ENCODE measurements at regions of chr17 and their contacts with region 1.

Region 1: GRCh38 chr17:76547184-76547641 is 7.4 kb downstream of the PRCD start:
- DNase-seq: peak; percentile 70 to 82 (median 74)
- ATAC-seq: peak; percentile 94
- H3K4me3 ChIP-seq: no peak overlapping the region
- H3K27ac ChIP-seq: no peak overlapping the region
- H3K4me1 ChIP-seq: peaks cover 0 to 39% of the 10 kb centered on the region in 2 experiments; a peak in 3 of 5 replicates
- H3K27me3 ChIP-seq: no peaks in the 10 kb centered on the region
- CTCF ChIP-seq: peak; percentile 84 to 88 (median 86)
- EP300 ChIP-seq: no peak
- POLR2A ChIP-seq: no peak
- RAD21 ChIP-seq: peak; percentile 72 to 90

Region 2: DNA sequence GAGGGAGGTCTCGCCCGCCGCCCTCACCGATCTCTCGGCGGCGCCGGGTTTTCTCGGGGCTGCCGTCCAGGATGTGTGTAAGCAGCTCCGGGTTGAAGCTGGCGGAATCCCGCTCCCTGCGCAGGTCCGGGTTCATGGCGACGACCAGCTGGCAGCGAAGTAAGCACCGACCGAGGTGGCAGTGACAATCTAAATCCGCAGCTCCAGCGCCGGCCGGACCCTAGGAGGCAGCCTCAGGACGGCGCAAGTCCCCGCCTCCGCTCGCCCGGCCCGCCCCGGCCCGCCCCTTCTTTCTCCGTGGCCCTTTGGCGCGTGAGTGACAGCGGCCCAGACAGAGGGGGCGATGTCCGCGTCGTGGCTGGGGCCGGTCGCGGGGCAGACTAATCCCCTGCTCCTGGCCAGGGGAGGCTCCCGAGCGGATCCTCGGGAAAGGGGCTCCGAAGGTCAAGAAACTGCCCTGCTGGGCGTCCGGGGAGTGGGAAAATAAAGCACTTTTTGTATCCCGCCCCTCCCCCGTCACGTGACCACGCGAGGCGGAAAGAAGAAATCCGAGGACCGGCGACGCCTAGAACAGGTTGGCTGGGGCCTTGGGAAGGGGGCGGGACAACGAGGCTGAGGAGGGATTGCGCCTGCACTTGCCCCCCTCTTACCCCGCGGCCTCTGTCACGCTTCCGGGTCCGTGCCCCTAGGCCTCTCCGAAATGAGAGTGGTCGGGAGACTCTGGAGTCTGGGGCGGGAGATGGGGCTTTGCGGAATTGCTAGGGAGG is 568.1 kb before region 1 on chr17 and contains the starts of genes ACOX1 and TEN1:
- CTCF ChIA-PET with region 1: no interaction called
- POLR2A ChIA-PET with region 1: no interaction called
- in situ Hi-C with region 1: no loop called
- intact Hi-C with region 1: no loop called
- DNase-seq: peak; percentile 91 to 98 (median 92)
- ATAC-seq: peak; percentile 94
- H3K4me3 ChIP-seq: peak within 1 kb of the TSS; percentile 67
- H3K27ac ChIP-seq: peak within 1 kb of the TSS; percentile 78
- H3K4me1 ChIP-seq: peaks cover 34 to 39% of the 10 kb centered on the region in 2 experiments
- H3K27me3 ChIP-seq: no peaks in the 10 kb centered on the region
- CTCF ChIP-seq: peak; percentile 20 to 47 (median 28); a peak in 4 of 6 replicates
- EP300 ChIP-seq: peak; percentile 24; the same call in 1 of the 2 replicates
- POLR2A ChIP-seq: peak; percentile 96
- RAD21 ChIP-seq: peak in 1 of 2 experiments; percentile 27; a peak in 2 of 4 replicates
- polyA plus RNA-seq, gene ACOX1: 8.6 to 9.5 TPM
- polyA plus RNA-seq, gene TEN1: 1.3 to 3.3 TPM

Region 3: GRCh38 chr17:76467366-76467765 is 79.8 kb before region 1 on chr17 and contains the start of gene AANAT:
- CTCF ChIA-PET with region 1: interaction called, 8 read pairs
- POLR2A ChIA-PET with region 1: no interaction called
- in situ Hi-C with region 1: no loop called
- intact Hi-C with region 1: loop called (anchors 1 kb)
- DNase-seq: no peak
- ATAC-seq: no peak
- H3K4me3 ChIP-seq: no peak within 1 kb of the TSS
- H3K27ac ChIP-seq: no peak within 1 kb of the TSS
- H3K4me1 ChIP-seq: peaks cover 0 to 36% of the 10 kb centered on the region in 2 experiments; a peak in 2 of 5 replicates
- H3K27me3 ChIP-seq: peaks cover 6 to 47% of the 10 kb centered on the region in 2 experiments; a peak in 3 of 5 replicates
- CTCF ChIP-seq: no peak
- EP300 ChIP-seq: no peak
- POLR2A ChIP-seq: no peak
- RAD21 ChIP-seq: no peak
- polyA plus RNA-seq, gene AANAT: not detected